ENCODE measurements at regions of chr6 and their contacts with region 1.

Region 1: DNA sequence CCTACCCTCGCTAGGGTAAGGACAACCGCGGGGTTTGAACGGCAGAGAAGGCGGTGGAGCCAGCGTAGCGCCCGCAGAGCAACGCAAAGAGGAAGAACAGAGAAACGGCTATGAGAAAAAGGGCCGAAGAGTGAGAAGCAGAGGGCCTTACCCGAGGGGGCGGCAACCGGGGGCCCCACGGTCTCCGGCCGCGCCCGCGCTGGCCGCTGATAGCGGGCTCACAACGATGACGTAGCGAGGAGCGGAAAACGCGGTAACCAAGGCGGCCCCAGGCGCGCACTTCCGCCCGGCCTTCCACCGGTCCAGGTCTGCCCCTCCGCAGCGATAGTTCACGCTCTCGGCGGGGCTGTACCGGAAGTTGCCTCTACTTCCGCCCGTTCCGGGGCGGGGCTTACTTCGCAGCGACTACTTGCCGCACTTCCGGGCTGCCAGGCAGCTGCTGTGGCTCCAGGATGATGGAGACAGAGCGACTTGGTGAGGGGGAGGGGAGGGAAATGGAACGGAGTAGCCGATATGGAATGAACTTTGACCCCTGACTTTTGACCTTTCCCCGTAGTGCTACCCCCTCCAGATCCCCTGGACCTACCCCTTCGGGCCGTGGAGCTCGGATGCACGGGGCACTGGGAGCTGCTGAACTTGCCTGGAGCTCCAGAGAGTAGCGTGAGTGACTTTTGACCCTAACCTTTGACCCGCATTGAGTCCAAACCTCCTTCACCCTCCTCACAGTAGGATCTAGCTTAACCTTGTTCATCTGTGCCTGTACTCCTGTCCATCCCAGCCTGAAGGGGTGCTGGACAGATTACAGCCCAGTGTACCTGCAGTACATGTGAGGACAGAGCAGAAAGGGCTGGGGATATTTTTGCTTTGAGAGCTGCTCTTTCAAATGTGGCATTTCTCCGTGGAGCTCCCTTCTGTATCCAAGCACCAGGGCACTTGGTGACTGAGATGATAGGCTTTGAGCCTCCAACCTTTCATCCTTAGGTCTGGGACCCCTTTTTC is at the starts of genes NELFE and SKIC2:
- H3K4me3 Mint-ChIP-seq: peak within 1 kb of the TSS; percentile 90
- H3K27ac Mint-ChIP-seq: peak within 1 kb of the TSS; percentile 92
- H3K4me1 Mint-ChIP-seq: peaks cover 49% of the 10 kb centered on the region
- H3K27me3 Mint-ChIP-seq: no peaks in the 10 kb centered on the region

Region 2: DNA sequence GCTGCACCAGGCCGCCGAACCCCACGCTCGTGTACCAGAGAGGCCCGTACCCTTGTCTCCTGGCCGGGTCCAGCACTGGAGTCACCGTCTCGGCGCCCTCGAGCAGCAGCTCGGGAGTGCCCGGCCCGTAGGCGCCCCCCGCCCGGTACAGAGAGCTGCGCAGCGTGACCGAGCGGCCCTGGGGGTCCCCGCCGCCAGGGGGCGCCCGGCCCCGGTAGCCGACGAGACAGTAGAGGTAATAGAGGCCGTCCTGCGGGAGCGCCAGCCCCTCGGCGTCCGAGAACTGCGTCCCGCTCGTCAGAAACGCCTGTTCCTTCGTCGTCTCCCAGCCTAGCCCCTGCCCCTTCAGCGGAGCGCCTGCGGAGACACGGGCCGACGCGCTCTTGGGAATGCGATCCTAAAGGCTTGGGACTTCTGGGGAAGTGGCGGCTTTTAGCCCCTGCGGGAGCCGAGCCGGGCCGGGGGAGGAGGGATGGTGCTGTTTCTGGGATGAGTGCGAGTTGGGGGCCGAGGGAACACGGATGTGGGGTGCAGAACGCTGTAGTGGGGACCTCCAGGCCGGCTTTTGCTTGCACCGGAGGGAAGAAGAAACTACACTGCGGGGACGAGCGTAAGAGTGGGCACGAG is 378.1 kb before region 1 on chr6:
- intact Hi-C with region 1: no loop called
- H3K4me3 Mint-ChIP-seq: peak overlapping the region; percentile 90
- H3K27ac Mint-ChIP-seq: peak overlapping the region; percentile 93
- H3K4me1 Mint-ChIP-seq: peaks cover 64% of the 10 kb centered on the region
- H3K27me3 Mint-ChIP-seq: no peaks in the 10 kb centered on the region

Region 3: GRCh38 chr6:31897612-31898382 is 61.2 kb before region 1 on chr6 and contains the start of gene EHMT2:
- intact Hi-C with region 1: loop called (anchors 5 kb)
- H3K4me3 Mint-ChIP-seq: peak within 1 kb of the TSS; percentile 89
- H3K27ac Mint-ChIP-seq: peak within 1 kb of the TSS; percentile 88
- H3K4me1 Mint-ChIP-seq: peaks cover 50% of the 10 kb centered on the region
- H3K27me3 Mint-ChIP-seq: no peaks in the 10 kb centered on the region

Region 4: DNA sequence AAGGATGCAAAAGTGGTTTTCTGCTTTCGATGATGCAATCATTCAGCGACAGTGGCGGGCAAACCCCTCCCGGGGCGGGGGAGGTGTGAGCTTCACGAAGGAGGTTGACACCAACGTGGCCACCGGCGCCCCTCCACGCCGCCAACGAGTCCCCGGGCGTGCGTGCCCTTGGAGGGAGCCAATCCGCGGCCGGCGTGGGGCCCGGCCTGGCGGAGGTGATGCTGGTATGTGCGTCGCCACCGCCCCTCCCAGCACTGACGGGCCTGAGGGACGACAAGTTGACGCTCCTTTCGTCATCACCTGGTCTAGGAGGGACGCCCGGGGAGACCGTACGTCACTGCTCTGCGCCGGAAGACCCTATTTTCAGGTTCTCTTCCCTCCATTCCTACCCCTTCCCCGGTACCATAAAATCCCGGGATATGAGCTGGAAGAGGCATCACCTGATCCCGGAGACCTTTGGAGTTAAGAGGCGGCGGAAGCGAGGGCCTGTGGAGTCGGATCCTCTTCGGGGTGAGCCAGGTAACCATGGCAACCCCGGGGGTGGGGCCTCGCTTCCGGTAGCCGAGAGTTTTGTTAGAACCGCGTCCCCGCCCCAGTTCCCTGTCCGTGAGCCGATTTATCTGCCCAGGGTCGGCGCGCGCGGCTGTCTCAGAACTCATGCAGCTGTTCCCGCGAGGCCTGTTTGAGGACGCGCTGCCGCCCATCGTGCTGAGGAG is 13.1 kb after region 1 on chr6 and contains the start of gene DXO:
- intact Hi-C with region 1: loop called (anchors 1 kb)
- H3K4me3 Mint-ChIP-seq: peak within 1 kb of the TSS; percentile 88
- H3K27ac Mint-ChIP-seq: peak within 1 kb of the TSS; percentile 98
- H3K4me1 Mint-ChIP-seq: peaks cover 43% of the 10 kb centered on the region
- H3K27me3 Mint-ChIP-seq: no peaks in the 10 kb centered on the region